Endothelial cell of umbilical vein (primary cell): ENCODE measurements at regions of chr16 and their contacts with region 1.

Region 1: GRCh38 chr16:71610936-71611871 is 14.8 kb upstream of the MARVELD3 start:
- DNase-seq: peak; percentile 64
- H3K4me3 ChIP-seq: no peak overlapping the region
- H3K27ac ChIP-seq: no peak overlapping the region
- H3K4me1 ChIP-seq: no peaks in the 10 kb centered on the region
- H3K27me3 ChIP-seq: no peaks in the 10 kb centered on the region
- CTCF ChIP-seq: peak; percentile 97 to 99
- POLR2A ChIP-seq: no peak

Region 2: DNA sequence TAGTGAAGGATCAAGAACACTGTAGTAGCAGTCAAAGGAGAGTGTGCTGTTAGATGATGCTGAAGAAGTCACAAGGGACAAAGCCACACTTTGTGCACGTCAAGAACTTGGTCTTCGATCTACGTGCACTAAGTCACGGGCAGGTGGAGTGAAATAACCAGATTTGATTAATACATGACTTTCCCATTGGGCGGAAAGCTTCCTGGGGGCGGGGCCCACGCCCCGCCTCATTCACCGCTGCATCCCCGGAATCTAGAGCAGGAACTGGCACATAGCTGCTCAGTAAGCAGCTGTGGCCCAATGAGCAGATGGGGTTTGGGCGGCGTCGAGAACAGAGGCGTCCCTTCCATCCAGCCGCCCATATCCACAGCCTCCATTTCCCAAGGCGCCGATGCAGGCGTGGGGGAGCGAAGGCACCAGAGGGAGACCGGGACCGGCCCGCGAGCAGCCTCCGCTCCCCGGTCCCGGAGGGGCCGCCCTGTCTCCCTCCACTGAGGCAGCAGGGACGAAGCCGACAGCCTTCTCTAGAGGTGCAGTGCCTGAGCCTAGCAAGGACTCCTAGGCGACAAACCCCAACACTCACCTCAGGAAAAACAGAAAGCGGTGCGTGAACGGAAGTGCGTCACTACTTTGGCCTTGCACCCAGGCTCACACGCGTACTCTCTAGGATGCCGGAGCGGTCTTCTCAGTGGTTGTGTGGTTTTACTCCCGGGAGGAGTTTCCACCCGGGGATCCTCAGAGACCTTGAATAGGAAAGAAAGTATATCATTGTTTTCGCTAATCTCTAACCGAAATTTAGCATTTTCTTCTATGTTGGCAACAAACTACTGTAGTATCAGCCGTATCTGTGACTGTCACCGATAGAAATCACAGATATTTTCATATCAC is 127.0 kb before region 1 on chr16:
- CTCF ChIA-PET with region 1: interaction called, 6 read pairs
- POLR2A ChIA-PET with region 1: no interaction called
- dilution Hi-C with region 1: no loop called
- intact Hi-C with region 1: loop called (anchors 5 kb)
- DNase-seq: peak; percentile 88
- H3K4me3 ChIP-seq: peak overlapping the region; percentile 16 to 80 (median 67)
- H3K27ac ChIP-seq: peak overlapping the region; percentile 76
- H3K4me1 ChIP-seq: peaks cover 4% of the 10 kb centered on the region
- H3K27me3 ChIP-seq: no peaks in the 10 kb centered on the region
- CTCF ChIP-seq: no peak
- POLR2A ChIP-seq: peak; percentile 70

Region 3: DNA sequence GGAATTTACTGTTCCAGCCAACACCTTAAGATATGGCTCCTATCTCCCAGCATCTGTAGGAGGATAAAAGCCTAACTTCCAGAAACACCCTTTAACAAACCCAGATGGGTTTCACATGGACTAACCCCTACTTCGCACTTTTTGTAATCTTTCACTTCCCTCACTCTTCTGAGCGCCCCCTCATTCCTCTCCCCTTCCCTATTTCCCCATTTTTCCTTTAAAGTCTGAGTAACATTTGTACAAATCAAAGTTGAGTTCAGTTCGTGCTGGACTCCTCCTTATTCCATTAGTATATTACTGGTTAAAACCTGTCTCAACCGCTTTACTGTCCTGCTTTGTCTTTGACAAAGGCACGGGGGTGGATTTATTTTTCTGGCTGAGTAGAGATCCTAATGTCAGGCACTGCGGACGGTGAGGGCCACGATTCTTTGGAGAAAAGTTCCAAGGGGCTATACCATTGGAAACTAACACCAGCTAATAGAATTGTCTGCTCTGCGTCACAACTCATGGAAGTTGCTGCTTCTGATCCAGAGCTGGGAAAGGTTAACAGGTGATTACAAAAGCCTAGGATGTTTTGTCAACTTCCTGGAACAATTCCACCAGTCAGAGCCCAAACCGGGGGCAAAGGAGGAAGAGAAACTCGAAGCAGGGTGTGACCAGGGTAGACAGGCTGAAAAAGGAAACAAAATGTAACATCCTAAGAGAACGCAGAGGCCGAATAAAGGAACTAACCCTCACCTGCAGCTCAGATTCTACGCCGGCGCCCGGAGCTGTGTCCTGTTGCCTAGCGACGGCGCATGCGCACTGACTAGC is 46.8 kb before region 1 on chr16:
- CTCF ChIA-PET with region 1: interaction called, 12 read pairs
- POLR2A ChIA-PET with region 1: no interaction called
- dilution Hi-C with region 1: no loop called
- intact Hi-C with region 1: loop called (anchors 2 kb)
- DNase-seq: no peak
- H3K4me3 ChIP-seq: peak overlapping the region; percentile 24 to 60 (median 48)
- H3K27ac ChIP-seq: no peak overlapping the region
- H3K4me1 ChIP-seq: peaks cover 2% of the 10 kb centered on the region
- H3K27me3 ChIP-seq: peaks cover 3 to 10% of the 10 kb centered on the region in 2 experiments
- CTCF ChIP-seq: no peak
- POLR2A ChIP-seq: no peak

Region 4: GRCh38 chr16:71593048-71593999 is 17.9 kb before region 1 on chr16:
- CTCF ChIA-PET with region 1: interaction called, 10 read pairs
- POLR2A ChIA-PET with region 1: no interaction called
- dilution Hi-C with region 1: no loop called
- intact Hi-C with region 1: no loop called
- DNase-seq: no peak
- H3K4me3 ChIP-seq: no peak overlapping the region
- H3K27ac ChIP-seq: no peak overlapping the region
- H3K4me1 ChIP-seq: no peaks in the 10 kb centered on the region
- H3K27me3 ChIP-seq: no peaks in the 10 kb centered on the region
- CTCF ChIP-seq: no peak
- POLR2A ChIP-seq: no peak

Region 5: GRCh38 chr16:71628810-71629209 is 17.6 kb after region 1 on chr16:
- CTCF ChIA-PET with region 1: interaction called, 18 read pairs
- POLR2A ChIA-PET with region 1: no interaction called
- dilution Hi-C with region 1: no loop called
- intact Hi-C with region 1: no loop called
- DNase-seq: peak; percentile 54
- H3K4me3 ChIP-seq: no peak overlapping the region
- H3K27ac ChIP-seq: no peak overlapping the region
- H3K4me1 ChIP-seq: peaks cover 2% of the 10 kb centered on the region
- H3K27me3 ChIP-seq: peaks cover 10 to 26% of the 10 kb centered on the region in 2 experiments
- CTCF ChIP-seq: no peak
- POLR2A ChIP-seq: no peak

Region 6: GRCh38 chr16:71645453-71645852 is 34.2 kb after region 1 on chr16:
- CTCF ChIA-PET with region 1: no interaction called
- POLR2A ChIA-PET with region 1: no interaction called
- dilution Hi-C with region 1: no loop called
- intact Hi-C with region 1: no loop called
- DNase-seq: no peak
- H3K4me3 ChIP-seq: no peak overlapping the region
- H3K27ac ChIP-seq: no peak overlapping the region
- H3K4me1 ChIP-seq: no peaks in the 10 kb centered on the region
- H3K27me3 ChIP-seq: no peaks in the 10 kb centered on the region
- CTCF ChIP-seq: peak; percentile 6 to 33
- POLR2A ChIP-seq: no peak